AG04450 (cell line): ENCODE measurements at regions of chr20 and their contacts with region 1.

Region 1: GRCh38 chr20:36835453-36836198 is 40.3 kb upstream of the TLDC2 start:
- DNase-seq: peak; percentile 90
- H3K4me3 ChIP-seq: no peak overlapping the region
- H3K27ac ChIP-seq: peak overlapping the region; percentile 83
- H3K27me3 ChIP-seq: no peaks in the 10 kb centered on the region
- CTCF ChIP-seq: no peak

Region 2: GRCh38 chr20:35893942-35894341 is 941.7 kb before region 1 on chr20:
- CTCF ChIA-PET with region 1: no interaction called
- POLR2A ChIA-PET with region 1: no interaction called
- DNase-seq: no peak
- H3K4me3 ChIP-seq: no peak overlapping the region
- H3K27ac ChIP-seq: no peak overlapping the region
- H3K27me3 ChIP-seq: no peaks in the 10 kb centered on the region
- CTCF ChIP-seq: no peak

Region 3: GRCh38 chr20:36238760-36239159 is 596.9 kb before region 1 on chr20:
- CTCF ChIA-PET with region 1: interaction called, 10 read pairs
- POLR2A ChIA-PET with region 1: no interaction called
- DNase-seq: no peak
- H3K4me3 ChIP-seq: no peak overlapping the region
- H3K27ac ChIP-seq: no peak overlapping the region
- H3K27me3 ChIP-seq: no peaks in the 10 kb centered on the region
- CTCF ChIP-seq: no peak

Region 4: DNA sequence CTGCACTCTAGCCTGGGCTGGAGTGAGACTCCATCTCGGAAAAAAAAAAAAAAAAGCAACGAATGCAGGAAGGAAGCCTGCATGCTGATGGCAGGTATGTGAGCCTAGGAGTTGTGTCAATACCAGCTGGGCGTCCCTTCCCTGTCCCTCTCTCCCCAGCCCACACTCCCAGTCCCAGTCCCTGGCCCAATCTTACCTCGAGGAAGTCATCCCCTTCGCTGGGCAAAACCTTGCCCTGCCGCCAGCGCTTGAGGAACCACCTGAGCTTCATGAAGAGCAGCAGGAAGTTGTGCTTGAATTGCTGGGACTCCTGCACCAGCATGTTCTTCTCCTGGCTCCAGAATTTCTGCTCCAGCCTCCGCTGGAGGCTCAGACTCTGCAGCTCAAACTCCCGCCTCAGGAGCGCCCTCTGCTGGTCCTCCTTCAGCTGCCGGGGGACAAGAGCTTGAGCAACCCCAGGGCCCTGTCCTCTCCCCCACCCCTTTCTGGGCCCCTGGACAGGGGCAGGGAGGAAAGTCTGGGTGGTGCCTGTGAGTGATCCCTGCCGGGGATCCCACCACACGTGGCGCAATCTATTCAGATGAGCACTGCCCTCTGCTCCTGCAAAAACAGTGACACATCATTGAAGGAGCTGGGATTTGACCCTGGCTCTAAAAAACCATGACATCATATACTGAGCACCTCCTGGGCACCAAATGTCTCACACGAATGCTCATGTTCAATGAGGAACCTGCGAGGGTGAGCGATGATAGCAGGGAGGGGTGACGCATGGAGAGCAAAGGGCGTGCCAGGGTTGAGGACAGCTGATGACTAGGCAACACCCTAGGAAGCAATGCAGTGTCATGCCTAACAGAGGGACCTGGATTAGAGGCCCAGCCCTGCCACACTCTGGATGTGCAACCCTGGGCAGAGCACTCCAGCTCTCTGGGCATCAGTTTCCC is 27.0 kb before region 1 on chr20:
- CTCF ChIA-PET with region 1: interaction called, 12 read pairs
- POLR2A ChIA-PET with region 1: interaction called, 4 read pairs
- DNase-seq: peak; percentile 38
- H3K4me3 ChIP-seq: no peak overlapping the region
- H3K27ac ChIP-seq: peak overlapping the region; percentile 52
- H3K27me3 ChIP-seq: no peaks in the 10 kb centered on the region
- CTCF ChIP-seq: peak; percentile 73

Region 5: DNA sequence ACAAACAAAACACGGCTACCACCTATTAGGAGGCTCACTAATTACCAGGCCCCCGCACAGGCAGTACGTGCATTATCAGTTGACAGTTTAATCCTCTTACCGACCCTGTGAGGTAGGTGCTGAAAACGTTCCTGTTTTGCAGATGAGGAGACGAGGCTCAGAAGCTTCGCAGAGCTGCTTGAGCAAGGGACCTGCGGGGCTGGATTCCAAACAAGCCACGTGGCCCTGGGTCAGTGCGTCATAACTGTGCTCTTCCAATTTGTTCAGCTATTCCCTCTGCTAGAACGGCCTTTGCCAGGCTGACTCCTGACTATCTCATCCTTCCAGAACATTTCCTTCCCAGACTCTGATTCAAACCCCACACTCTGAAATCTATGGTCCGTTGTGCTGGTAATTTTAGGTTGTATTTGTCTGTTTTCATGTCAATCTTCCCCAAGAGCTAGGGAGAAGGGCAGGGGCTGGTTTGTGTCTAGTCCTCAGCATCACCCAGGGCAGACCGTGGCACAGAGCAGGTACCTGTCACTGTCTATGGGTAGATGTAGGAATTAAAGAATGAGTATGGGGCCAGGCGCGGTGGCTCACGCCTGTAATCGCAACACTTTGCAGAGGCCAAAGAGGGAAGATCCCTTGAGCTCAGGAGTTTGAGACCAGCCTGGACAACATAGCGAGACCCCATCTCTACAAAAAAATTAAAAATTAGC is 11.5 kb after region 1 on chr20:
- CTCF ChIA-PET with region 1: interaction called, 15 read pairs
- POLR2A ChIA-PET with region 1: interaction called, 11 read pairs
- DNase-seq: peak; percentile 52
- H3K4me3 ChIP-seq: no peak overlapping the region
- H3K27ac ChIP-seq: peak overlapping the region; percentile 98
- H3K27me3 ChIP-seq: no peaks in the 10 kb centered on the region
- CTCF ChIP-seq: no peak

Region 6: DNA sequence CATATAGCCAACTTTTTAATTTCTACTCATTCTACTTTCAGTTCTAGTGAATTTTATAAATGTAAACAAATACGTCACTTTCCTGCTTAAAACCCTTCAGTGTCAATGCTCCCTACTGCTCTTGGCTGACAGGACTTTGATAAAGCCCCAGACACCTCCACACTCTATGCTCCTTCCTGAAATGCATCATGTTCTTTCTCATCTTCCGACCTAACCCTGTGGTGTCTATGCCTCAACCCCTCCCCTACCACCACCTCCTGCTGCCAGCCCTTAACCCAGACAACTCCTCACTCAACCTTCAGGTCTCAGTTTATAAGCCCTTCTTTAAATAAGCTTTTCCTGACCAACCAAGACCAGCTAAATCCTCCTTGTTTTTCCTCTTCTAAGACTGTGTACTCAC is 59.4 kb after region 1 on chr20:
- CTCF ChIA-PET with region 1: no interaction called
- POLR2A ChIA-PET with region 1: interaction called, 11 read pairs
- DNase-seq: no peak
- H3K4me3 ChIP-seq: no peak overlapping the region
- H3K27ac ChIP-seq: no peak overlapping the region
- H3K27me3 ChIP-seq: no peaks in the 10 kb centered on the region
- CTCF ChIP-seq: no peak